Activated CD4-positive, alpha-beta T cell treated with anti-CD3 and anti-CD28 coated beads, Interleukin-2, amount 10 ng/mL, durations not matched to agents 24 days and 14 days (primary cell): ENCODE measurements at regions of chr2 and their contacts with region 1.

Region 1: DNA sequence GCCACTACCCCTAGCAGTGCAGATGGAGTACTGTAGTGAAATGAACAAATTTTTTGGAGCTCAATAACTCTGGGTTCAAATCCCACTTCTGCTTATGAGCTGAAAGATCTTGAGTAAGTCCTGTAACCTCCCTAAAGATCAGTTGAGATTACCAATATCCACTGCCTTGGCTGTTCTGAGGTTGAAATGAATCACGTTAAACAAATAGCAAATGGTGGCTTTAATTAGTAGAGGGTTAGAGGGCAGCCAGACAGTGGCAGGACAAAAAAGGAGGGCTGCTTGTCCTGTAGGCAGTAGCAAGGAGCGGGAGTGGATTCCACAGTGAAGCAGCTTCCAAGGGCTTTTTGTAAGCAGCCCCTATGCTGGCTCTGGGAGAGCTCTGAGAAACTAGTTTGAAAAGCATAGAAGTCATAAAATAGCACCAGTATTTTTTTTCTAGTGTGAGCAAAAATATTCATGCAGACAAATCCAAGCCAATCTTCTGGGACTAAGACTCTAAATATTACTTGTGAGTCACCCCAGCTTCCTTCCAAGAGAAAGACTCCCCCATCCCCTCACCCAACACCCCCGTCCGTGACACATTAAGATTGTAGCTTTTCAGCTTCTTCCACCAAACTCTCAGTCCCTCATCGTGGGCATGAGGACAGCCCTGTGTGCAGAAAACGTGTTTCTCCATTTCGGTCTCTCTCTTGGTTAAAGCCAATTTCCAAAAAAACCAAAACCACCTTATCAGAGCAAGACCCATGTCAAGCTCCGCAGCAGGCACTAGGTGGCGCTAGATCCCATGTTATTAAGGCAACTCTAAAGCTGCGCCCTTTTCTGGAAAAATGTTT is 123.5 kb upstream of the LGALSL start:
- DNase-seq: peak; percentile 92
- H3K4me3 Mint-ChIP-seq: peak overlapping the region; percentile 50
- H3K27ac Mint-ChIP-seq: peak overlapping the region; percentile 80
- H3K4me1 Mint-ChIP-seq: peaks cover 58% of the 10 kb centered on the region
- H3K27me3 Mint-ChIP-seq: peaks cover 2% of the 10 kb centered on the region

Region 2: GRCh38 chr2:64036034-64036705 is 294.3 kb before region 1 on chr2:
- intact Hi-C with region 1: loop called (anchors 1 kb)
- DNase-seq: peak; percentile 82
- H3K4me3 Mint-ChIP-seq: peak overlapping the region; percentile 22
- H3K27ac Mint-ChIP-seq: peak overlapping the region; percentile 76
- H3K4me1 Mint-ChIP-seq: peaks cover 42% of the 10 kb centered on the region
- H3K27me3 Mint-ChIP-seq: no peaks in the 10 kb centered on the region

Region 3: GRCh38 chr2:64114063-64114911 is 216.2 kb before region 1 on chr2:
- intact Hi-C with region 1: loop called (anchors 1 kb)
- DNase-seq: peak; percentile 74
- H3K4me3 Mint-ChIP-seq: peak overlapping the region; percentile 66
- H3K27ac Mint-ChIP-seq: peak overlapping the region; percentile 86
- H3K4me1 Mint-ChIP-seq: peaks cover 50% of the 10 kb centered on the region
- H3K27me3 Mint-ChIP-seq: no peaks in the 10 kb centered on the region

Region 4: GRCh38 chr2:64203858-64204632 is 126.5 kb before region 1 on chr2:
- intact Hi-C with region 1: loop called (anchors 1 kb)
- DNase-seq: peak; percentile 84
- H3K4me3 Mint-ChIP-seq: peak overlapping the region; percentile 75
- H3K27ac Mint-ChIP-seq: peak overlapping the region; percentile 75
- H3K4me1 Mint-ChIP-seq: peaks cover 71% of the 10 kb centered on the region
- H3K27me3 Mint-ChIP-seq: no peaks in the 10 kb centered on the region

Region 5: DNA sequence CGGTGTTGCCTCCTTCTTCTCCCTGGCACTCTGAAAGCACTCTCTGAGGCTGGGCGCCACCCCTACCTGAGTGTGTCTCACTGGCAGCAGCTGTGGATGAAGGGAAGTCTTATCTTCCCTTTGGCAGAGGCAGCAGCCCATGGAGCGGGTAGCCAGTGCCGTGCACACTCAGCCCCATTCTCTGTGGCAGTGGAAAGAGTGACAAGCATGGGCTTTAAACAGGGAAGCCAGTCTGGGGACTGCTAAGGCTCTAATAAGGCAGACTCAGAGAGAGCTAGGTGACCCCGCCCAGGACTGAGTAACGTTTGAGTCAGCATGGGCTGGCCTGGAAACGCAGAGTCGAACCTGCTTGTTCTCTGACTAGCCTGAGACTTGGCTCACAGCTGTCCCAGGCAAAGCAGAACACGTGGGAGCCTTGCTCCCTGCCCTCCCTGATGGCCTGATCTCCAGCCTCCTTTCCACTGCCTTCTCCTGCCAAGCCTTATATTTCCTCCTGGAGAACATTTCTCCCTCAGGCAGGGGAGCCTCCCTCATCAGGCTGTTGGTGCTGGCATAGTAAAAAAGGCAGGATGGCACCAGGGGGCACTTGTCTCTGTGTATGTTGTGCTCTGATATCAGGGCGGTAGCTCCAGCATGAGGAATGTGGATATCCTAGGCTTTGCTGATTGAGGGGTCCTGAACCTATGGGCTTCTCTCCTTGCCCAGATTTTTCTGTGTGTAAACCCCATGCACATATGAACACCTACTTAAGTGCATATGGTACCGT is 29.6 kb after region 1 on chr2:
- intact Hi-C with region 1: no loop called
- DNase-seq: peak; percentile 69
- H3K4me3 Mint-ChIP-seq: no peak overlapping the region
- H3K27ac Mint-ChIP-seq: no peak overlapping the region
- H3K4me1 Mint-ChIP-seq: peaks cover 9% of the 10 kb centered on the region
- H3K27me3 Mint-ChIP-seq: peaks cover 38% of the 10 kb centered on the region

Region 6: DNA sequence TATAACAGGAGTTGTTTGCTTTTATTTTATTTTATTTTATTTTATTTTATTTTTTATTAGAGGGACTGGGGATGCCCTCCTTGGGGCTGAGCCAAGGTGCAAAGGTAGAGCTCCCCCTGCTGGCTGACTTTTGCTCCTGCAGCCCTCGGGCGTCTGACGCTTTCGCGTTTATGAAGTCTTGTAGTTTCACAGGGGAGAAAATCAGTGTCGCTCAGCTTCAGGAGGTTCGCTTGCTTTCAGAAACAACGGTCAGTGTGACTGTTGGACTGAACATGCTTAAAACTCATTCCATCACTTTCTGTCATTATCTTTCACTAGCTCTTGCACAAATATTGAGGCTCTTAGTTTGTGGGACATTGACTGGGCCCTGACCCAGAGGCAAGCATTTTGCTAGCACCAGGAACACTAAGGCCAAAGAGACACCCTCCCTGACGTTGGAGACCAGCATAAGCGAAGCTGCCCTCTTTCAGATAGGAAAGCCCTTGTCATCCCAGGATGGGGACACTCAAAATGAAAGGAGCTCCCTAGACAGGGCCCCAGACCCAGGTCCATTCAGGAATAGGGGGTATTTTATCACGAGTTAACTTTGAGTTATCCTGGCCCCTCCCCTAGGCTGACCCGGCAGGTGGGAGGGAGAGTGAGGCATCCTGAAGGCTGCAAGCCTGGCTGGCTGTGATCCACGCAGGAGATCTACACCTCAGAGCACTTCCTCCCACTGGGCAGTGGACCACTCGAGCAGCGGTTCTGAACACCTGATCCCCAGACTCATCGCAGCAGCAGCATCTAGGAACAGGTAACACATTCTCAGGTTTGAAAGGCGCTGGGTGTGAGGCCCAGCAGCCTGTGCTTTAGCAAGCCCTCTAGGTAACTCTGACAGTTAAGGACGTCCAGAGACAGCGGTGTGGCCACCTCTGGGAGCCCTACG is 157.8 kb after region 1 on chr2:
- intact Hi-C with region 1: loop called (anchors 1 kb)
- DNase-seq: peak; percentile 93
- H3K4me3 Mint-ChIP-seq: no peak overlapping the region
- H3K27ac Mint-ChIP-seq: no peak overlapping the region
- H3K4me1 Mint-ChIP-seq: peaks cover 13% of the 10 kb centered on the region
- H3K27me3 Mint-ChIP-seq: peaks cover 24% of the 10 kb centered on the region

Region 7: GRCh38 chr2:64873472-64873924 is 543.0 kb after region 1 on chr2:
- intact Hi-C with region 1: loop called (anchors 1 kb)
- DNase-seq: peak; percentile 95
- H3K4me3 Mint-ChIP-seq: no peak overlapping the region
- H3K27ac Mint-ChIP-seq: no peak overlapping the region
- H3K4me1 Mint-ChIP-seq: peaks cover 11% of the 10 kb centered on the region
- H3K27me3 Mint-ChIP-seq: peaks cover 24% of the 10 kb centered on the region